AG04450 (cell line): ENCODE measurements at regions of chr2 and their contacts with region 1.

Region 1: DNA sequence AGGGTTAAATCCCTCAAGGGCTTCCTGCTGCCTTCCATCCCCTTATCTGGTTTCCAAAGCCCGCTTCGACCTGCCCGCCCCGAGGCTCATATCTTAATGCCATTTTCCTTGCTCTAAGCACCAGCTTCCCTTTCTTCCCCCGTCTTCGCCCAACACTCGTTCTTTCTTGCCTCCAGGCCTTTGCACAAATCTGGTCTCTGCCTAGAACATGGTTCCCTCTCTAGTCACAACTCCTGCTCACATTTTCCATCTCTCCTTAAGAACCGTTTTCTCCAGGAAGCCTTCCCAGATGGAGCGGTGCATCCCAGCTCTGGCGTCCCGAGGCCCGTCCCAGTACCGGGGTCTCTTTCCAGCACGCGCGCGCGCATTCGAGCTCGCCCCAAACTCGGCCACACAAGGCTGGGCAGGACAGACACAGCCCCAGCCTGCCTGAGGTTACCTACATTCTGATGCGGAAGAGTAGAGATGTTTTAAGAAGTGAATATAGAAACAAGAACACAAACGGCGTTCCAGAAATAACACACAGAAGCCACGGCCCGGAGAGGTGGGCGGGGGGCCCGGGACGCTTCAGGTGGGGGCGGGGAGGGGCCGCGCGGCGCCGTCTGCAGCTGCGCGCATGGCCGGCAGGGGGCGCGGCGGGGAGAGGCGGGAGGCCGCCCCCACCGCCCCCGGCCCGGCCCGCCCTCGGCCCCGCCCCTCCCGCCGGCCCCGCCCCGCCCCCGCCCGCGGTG is at the start of gene DGKD:
- DNase-seq: no peak
- H3K4me3 ChIP-seq: peak within 1 kb of the TSS; percentile 72
- H3K27ac ChIP-seq: no peak within 1 kb of the TSS
- H3K27me3 ChIP-seq: no peaks in the 10 kb centered on the region
- CTCF ChIP-seq: peak; percentile 9; the same call in 1 of the 2 replicates
- polyA plus RNA-seq, gene DGKD: 9.1 and 10.8 TPM in 2 replicates

Region 2: GRCh38 chr2:232999354-232999753 is 354.6 kb before region 1 on chr2:
- CTCF ChIA-PET with region 1: no interaction called
- POLR2A ChIA-PET with region 1: no interaction called
- DNase-seq: no peak
- H3K4me3 ChIP-seq: no peak overlapping the region
- H3K27ac ChIP-seq: no peak overlapping the region
- H3K27me3 ChIP-seq: peaks cover 14% of the 10 kb centered on the region
- CTCF ChIP-seq: no peak

Region 3: GRCh38 chr2:233343171-233343705 is 10.7 kb before region 1 on chr2:
- CTCF ChIA-PET with region 1: interaction called, 15 read pairs
- POLR2A ChIA-PET with region 1: no interaction called
- DNase-seq: no peak
- H3K4me3 ChIP-seq: no peak overlapping the region
- H3K27ac ChIP-seq: no peak overlapping the region
- H3K27me3 ChIP-seq: peaks cover under 1% of the 10 kb centered on the region
- CTCF ChIP-seq: no peak

Region 4: DNA sequence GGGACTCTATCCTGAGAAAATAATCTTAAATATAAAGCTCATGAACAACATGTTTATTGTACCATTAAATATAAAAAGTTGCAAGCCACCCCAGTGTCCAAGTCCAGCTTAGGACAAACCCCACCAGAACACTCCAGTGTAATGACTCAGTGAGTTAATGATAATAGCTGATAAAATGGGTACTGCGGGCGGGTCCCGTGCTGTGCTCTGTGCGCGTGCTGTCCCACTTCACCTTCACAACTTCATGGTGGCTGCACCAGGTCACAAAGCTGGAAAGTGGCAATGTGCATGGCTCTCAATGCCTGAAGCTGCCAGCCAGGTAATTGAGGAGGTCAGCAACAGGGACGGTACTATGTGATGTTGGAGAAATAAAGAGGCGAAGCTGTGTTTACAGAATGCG is 18.9 kb after region 1 on chr2:
- CTCF ChIA-PET with region 1: interaction called, 13 read pairs
- POLR2A ChIA-PET with region 1: no interaction called
- DNase-seq: no peak
- H3K4me3 ChIP-seq: no peak overlapping the region
- H3K27ac ChIP-seq: no peak overlapping the region
- H3K27me3 ChIP-seq: no peaks in the 10 kb centered on the region
- CTCF ChIP-seq: no peak

Region 5: DNA sequence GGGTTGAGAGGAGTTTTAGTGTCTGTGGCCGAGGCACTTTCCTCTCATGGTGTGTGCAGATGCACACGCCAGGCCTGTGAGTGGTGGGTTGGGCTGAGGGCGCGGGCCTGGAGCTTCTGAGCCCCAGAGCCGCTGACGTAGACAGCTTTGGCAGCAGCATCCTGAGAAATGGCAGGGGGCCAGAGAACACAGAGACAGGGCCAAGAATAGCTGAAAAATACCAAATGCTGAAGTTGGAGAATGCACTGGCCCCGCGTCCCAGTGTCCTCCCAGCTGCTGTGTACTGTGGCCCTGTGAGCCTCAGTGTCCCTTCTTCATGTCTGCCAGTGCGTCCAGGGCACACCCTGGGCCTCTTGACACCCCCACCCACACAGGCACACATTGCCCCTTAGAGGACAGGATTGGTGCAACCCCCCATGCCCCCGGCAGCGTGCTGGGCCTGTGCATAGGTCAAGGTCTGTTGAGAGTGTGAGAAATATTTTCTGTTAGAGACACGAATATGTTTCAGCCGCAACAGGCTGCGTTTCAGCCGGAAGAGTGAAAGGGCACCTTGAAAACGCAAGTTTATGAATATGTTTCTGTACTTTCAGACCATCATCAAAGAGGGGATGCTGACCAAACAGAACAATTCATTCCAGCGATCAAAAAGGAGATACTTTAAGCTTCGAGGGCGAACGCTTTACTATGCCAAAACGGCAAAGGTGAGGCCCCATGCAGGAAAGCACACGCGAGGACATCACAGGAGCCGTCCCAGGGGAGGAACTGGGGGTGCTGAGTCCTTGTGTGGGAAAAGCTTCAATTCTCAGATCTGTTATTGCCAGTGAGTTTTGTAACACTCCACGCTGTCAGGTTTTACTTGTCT is 34.0 kb after region 1 on chr2:
- CTCF ChIA-PET with region 1: interaction called, 10 read pairs
- POLR2A ChIA-PET with region 1: no interaction called
- DNase-seq: peak; percentile 84
- H3K4me3 ChIP-seq: peak overlapping the region; percentile 42
- H3K27ac ChIP-seq: peak overlapping the region; percentile 87
- H3K27me3 ChIP-seq: no peaks in the 10 kb centered on the region
- CTCF ChIP-seq: no peak

Region 6: GRCh38 chr2:233513953-233514655 is 160.2 kb after region 1 on chr2:
- CTCF ChIA-PET with region 1: no interaction called
- POLR2A ChIA-PET with region 1: no interaction called
- DNase-seq: no peak
- H3K4me3 ChIP-seq: no peak overlapping the region
- H3K27ac ChIP-seq: no peak overlapping the region
- H3K27me3 ChIP-seq: no peaks in the 10 kb centered on the region
- CTCF ChIP-seq: no peak